ENCODE measurements at regions of chr10 and their contacts with region 1.

Region 1: GRCh38 chr10:95832216-95833041 is 75.3 kb upstream of the CC2D2B start:
- DNase-seq: peak; percentile 92
- ATAC-seq: peak; percentile 91
- H3K4me3 Mint-ChIP-seq: peak overlapping the region; percentile 75
- H3K27ac Mint-ChIP-seq: peak overlapping the region; percentile 90
- H3K4me1 Mint-ChIP-seq: peaks cover 84% of the 10 kb centered on the region
- H3K27me3 Mint-ChIP-seq: no peaks in the 10 kb centered on the region

Region 2: DNA sequence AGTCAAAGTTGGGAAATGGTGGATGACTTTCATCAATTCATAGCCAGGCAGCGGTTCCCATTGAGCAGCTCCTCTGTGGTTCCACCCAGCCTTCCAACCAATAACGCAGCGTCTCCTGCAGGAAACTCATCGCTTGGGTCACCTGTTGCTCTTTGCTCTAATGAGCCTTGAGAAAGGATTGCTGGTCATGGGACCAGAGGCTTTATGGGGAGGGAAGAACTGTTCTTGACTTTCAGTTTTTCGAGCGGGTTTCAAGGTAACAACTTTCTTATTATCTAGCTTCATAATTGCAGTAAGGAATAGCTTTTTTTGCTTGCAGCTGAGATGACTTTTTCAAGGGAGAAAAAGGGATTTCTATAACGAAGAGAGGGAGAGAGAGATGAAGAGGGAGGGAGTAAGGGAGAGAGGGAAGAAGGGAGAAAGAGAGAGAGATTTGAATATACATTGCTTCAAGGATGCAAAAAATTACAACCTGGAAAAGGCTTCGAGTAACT is 76.9 kb before region 1 on chr10:
- CTCF ChIA-PET with region 1: interaction called, 21 read pairs
- DNase-seq: peak; percentile 74
- ATAC-seq: peak; percentile 37
- H3K4me3 Mint-ChIP-seq: peak overlapping the region; percentile 89
- H3K27ac Mint-ChIP-seq: peak overlapping the region; percentile 95
- H3K4me1 Mint-ChIP-seq: peaks cover 53% of the 10 kb centered on the region
- H3K27me3 Mint-ChIP-seq: peaks cover 5% of the 10 kb centered on the region

Region 3: GRCh38 chr10:95793401-95794045 is 38.9 kb before region 1 on chr10:
- CTCF ChIA-PET with region 1: interaction called, 16 read pairs
- DNase-seq: peak; percentile 93
- ATAC-seq: peak; percentile 62
- H3K4me3 Mint-ChIP-seq: peak overlapping the region; percentile 4
- H3K27ac Mint-ChIP-seq: peak overlapping the region; percentile 97
- H3K4me1 Mint-ChIP-seq: peaks cover 92% of the 10 kb centered on the region
- H3K27me3 Mint-ChIP-seq: no peaks in the 10 kb centered on the region